ENCODE measurements at regions of chr18 and their contacts with region 1.

Region 1: DNA sequence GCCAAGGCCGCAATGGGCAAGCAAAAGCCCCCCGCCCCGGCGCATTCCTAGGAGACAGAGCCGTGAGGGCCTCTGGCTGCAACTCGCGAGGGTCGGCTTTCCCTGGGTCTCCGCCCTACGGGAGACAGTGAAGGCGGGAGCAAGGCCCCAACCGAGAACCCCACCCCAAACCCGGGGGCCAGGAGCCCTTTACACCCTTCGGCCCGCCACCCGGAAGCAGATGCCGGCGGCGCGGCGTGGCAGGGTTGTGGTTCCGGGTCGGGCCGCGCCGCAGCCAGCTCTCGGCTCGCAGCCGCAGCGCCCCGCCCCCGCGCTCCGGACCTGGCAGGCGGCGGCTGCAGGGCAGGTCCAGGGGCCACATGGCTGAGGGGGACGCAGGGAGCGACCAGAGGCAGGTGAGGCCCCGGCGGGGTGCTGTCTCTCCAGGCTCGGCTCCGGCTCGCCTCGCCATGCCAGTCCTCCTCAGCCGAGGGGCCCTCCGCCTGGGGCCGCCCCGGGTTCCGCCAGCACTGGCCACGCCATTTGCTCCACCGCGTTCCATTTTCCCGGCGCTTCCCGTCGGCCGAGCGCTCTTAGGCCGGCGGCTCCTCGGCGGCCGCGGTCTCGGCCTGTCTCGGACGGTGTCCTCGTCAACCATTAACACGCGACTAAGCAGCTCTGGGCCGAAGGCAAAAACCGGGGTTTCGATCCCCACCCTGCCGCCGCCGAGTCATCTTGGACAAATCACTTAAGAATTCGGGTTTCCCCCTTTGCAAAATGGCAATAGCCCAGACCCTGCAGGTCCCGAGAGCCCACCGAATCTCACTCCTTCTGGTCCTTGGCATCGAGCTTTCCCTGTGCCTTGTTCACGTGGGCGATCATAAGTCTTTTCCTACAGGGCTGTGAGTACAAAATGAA is at the start of gene IMPACT:
- DNase-seq: peak; percentile 90
- ATAC-seq: peak; percentile 82
- H3K4me3 ChIP-seq: peak within 1 kb of the TSS; percentile 66 to 94 (median 79)
- H3K4me3 Mint-ChIP-seq: peak within 1 kb of the TSS; percentile 93
- H3K27ac ChIP-seq: peak within 1 kb of the TSS; percentile 48 to 60
- H3K27ac Mint-ChIP-seq: peak within 1 kb of the TSS; percentile 92
- H3K4me1 ChIP-seq: peaks cover 12 to 13% of the 10 kb centered on the region in 2 donors
- H3K4me1 Mint-ChIP-seq: peaks cover 14% of the 10 kb centered on the region
- H3K27me3 ChIP-seq: peaks cover 0 to 19% (median 11%) of the 10 kb centered on the region in 4 experiments
- H3K27me3 Mint-ChIP-seq: peaks cover 28% of the 10 kb centered on the region
- CTCF ChIP-seq: no peak
- total RNA-seq, gene IMPACT: 8.9 and 11.1 TPM in 2 replicates

Region 2: DNA sequence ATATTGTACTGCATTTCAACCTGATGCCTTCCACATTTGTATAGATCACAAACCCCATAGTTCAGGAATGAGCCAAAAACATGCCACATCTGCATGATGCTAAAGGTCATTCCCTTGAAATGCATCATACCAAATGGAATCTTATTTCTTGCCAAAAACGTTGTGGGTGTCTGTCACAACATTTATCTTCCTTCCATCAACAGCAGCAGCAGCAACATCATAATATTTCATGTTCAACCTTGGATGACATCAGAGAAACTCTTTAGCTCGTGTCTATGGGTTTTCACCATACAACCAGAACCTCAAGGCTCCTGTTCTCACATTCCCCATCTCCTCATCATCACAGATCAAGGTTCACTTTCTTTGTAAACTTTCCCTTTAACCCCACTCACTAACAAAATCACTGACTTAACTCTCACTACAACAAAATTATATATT is 1787.6 kb before region 1 on chr18:
- CTCF ChIA-PET with region 1: no interaction called
- POLR2A ChIA-PET with region 1: no interaction called
- intact Hi-C with region 1: no loop called
- DNase-seq: no peak
- ATAC-seq: no peak
- H3K4me3 ChIP-seq: no peak overlapping the region
- H3K4me3 Mint-ChIP-seq: no peak overlapping the region
- H3K27ac ChIP-seq: no peak overlapping the region
- H3K27ac Mint-ChIP-seq: no peak overlapping the region
- H3K4me1 ChIP-seq: no peaks in the 10 kb centered on the region
- H3K4me1 Mint-ChIP-seq: no peaks in the 10 kb centered on the region
- H3K27me3 ChIP-seq: no peaks in the 10 kb centered on the region
- H3K27me3 Mint-ChIP-seq: no peaks in the 10 kb centered on the region
- CTCF ChIP-seq: no peak

Region 3: DNA sequence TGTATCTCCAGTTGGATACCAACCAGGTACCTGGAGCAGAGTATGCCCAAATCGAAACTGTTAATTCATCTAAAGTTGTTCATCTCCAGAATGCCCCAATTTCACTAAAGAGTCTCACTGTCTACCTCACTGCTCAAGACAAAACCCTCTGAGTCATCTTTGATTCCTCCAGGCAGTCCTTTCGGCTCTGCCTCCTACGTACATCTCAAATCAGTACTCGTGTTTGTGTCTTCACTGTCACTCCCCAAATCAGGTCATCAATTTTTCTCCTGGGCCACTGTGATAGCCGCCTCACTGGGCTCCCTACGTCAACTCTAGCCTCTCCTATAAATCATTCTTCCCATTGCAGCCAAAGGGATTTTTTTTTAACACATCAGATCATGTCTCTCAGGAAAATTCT is 454.2 kb before region 1 on chr18:
- CTCF ChIA-PET with region 1: no interaction called
- POLR2A ChIA-PET with region 1: no interaction called
- intact Hi-C with region 1: loop called (anchors 10 kb)
- DNase-seq: no peak
- ATAC-seq: no peak
- H3K4me3 ChIP-seq: no peak overlapping the region
- H3K4me3 Mint-ChIP-seq: no peak overlapping the region
- H3K27ac ChIP-seq: no peak overlapping the region
- H3K27ac Mint-ChIP-seq: peak overlapping the region; percentile 80
- H3K4me1 ChIP-seq: peaks cover 42 to 46% of the 10 kb centered on the region in 2 donors
- H3K4me1 Mint-ChIP-seq: peaks cover 61% of the 10 kb centered on the region
- H3K27me3 ChIP-seq: no peaks in the 10 kb centered on the region
- H3K27me3 Mint-ChIP-seq: no peaks in the 10 kb centered on the region
- CTCF ChIP-seq: no peak

Region 4: GRCh38 chr18:24397694-24398365 is 28.8 kb before region 1 on chr18 and contains the start of gene OSBPL1A:
- CTCF ChIA-PET with region 1: interaction called, 3 read pairs
- POLR2A ChIA-PET with region 1: interaction called, 3 read pairs
- intact Hi-C with region 1: loop called (anchors 2 kb)
- DNase-seq: peak; percentile 74
- ATAC-seq: peak; percentile 88
- H3K4me3 ChIP-seq: peak within 1 kb of the TSS; percentile 57 to 70 (median 63)
- H3K4me3 Mint-ChIP-seq: peak within 1 kb of the TSS; percentile 91
- H3K27ac ChIP-seq: no peak within 1 kb of the TSS
- H3K27ac Mint-ChIP-seq: peak within 1 kb of the TSS; percentile 41
- H3K4me1 ChIP-seq: peaks cover 7 to 13% of the 10 kb centered on the region in 2 donors
- H3K4me1 Mint-ChIP-seq: peaks cover 16% of the 10 kb centered on the region
- H3K27me3 ChIP-seq: peaks cover 0 to 12% (median 5%) of the 10 kb centered on the region in 4 experiments
- H3K27me3 Mint-ChIP-seq: peaks cover 46% of the 10 kb centered on the region
- CTCF ChIP-seq: no peak
- total RNA-seq, gene OSBPL1A: 0.63 and 0.86 TPM in 2 replicates